OCI-LY7 (cell line): ENCODE measurements at regions of chr6 and their contacts with region 1.

Region 1: GRCh38 chr6:148947621-148948444 is 201.0 kb downstream of the UST start:
- DNase-seq: peak; percentile 78
- H3K4me3 ChIP-seq: no peak overlapping the region
- H3K27ac ChIP-seq: no peak overlapping the region
- H3K4me1 ChIP-seq: no peaks in the 10 kb centered on the region
- CTCF ChIP-seq: peak; percentile 93

Region 2: GRCh38 chr6:148559848-148560433 is 387.9 kb before region 1 on chr6:
- CTCF ChIA-PET with region 1: no interaction called
- POLR2A ChIA-PET with region 1: no interaction called
- intact Hi-C with region 1: loop called (anchors 5 kb)
- DNase-seq: peak; percentile 52
- H3K4me3 ChIP-seq: no peak overlapping the region
- H3K27ac ChIP-seq: no peak overlapping the region
- H3K4me1 ChIP-seq: peaks cover 3% of the 10 kb centered on the region
- CTCF ChIP-seq: peak; percentile 92

Region 3: DNA sequence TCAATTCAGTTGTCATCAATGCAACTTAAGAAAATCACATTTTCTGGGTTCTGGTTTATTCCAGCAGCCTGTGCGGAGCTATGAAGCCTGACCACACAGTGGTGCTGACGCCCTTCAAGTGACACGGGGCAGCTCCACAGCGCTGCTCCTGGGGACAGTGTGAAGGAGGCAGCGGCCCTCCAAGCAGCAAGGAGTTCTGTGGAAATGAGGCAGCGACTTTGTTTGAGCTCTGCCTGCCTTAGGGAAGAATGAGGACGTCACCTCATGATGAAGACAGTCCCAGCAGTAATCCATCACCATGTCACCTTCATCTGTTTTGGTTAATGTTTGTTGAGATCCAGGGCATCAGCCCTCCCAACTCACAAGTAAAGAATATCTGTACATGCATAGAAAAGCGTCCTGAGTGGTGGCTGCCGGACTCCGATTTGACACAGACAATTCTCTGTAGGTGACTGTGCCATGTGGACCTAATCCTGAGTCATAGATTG is 369.5 kb before region 1 on chr6:
- CTCF ChIA-PET with region 1: no interaction called
- POLR2A ChIA-PET with region 1: no interaction called
- intact Hi-C with region 1: loop called (anchors 1 kb)
- DNase-seq: peak; percentile 69
- H3K4me3 ChIP-seq: no peak overlapping the region
- H3K27ac ChIP-seq: no peak overlapping the region
- H3K4me1 ChIP-seq: no peaks in the 10 kb centered on the region
- CTCF ChIP-seq: peak; percentile 93

Region 4: DNA sequence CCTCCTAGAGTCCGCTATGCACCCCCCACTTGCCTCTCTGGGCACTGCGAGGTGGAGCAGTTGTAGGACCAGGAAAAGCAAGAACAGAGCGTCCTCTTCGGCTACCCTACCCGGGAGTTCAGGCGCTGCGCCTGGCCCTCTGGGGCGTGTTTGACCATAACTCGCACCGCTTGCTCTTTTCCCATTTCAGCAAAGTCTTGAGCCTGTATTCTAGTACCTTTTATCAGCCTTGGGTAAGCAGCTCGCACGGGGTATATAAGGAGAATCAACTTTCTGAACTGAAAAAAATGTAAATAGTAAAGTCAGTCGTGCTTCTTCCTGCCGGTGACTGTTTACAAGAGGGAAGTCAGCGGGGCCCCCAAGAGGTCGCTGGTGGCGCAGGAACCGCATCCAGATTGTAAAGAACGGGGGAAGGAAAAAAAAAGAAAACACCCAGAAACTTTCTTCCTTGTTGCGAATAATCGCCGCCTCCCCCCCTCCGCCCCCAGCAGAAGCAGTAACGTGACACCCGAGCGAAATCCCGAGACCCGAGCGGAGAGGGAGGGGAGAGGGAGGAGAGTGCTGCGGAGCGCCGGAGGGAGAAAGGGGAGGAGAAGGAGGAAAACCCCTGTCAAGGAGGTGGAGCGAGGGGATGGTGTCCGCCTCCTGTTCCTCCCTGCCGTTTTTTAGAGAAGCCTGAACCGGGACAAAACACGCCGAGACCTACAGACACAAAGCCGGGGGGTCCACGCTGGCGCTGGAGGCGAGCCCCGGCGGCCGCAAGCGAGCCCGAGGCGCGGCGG is 201.3 kb before region 1 on chr6 and contains the start of gene UST:
- CTCF ChIA-PET with region 1: interaction called, 3 read pairs
- POLR2A ChIA-PET with region 1: no interaction called
- intact Hi-C with region 1: loop called (anchors 1 kb)
- DNase-seq: peak; percentile 83
- H3K4me3 ChIP-seq: peak within 1 kb of the TSS; percentile 84
- H3K27ac ChIP-seq: no peak within 1 kb of the TSS
- H3K4me1 ChIP-seq: peaks cover 14% of the 10 kb centered on the region
- CTCF ChIP-seq: peak; percentile 88
- total RNA-seq, gene UST: 0.59 and 1.4 TPM in 2 replicates

Region 5: GRCh38 chr6:148790817-148791216 is 157.0 kb before region 1 on chr6:
- CTCF ChIA-PET with region 1: no interaction called
- POLR2A ChIA-PET with region 1: no interaction called
- intact Hi-C with region 1: no loop called
- DNase-seq: peak; percentile 15
- H3K4me3 ChIP-seq: no peak overlapping the region
- H3K27ac ChIP-seq: no peak overlapping the region
- H3K4me1 ChIP-seq: peaks cover 6% of the 10 kb centered on the region
- CTCF ChIP-seq: no peak